Caco-2 (cell line): ENCODE measurements at regions of chr19 and their contacts with region 1.

Region 1: DNA sequence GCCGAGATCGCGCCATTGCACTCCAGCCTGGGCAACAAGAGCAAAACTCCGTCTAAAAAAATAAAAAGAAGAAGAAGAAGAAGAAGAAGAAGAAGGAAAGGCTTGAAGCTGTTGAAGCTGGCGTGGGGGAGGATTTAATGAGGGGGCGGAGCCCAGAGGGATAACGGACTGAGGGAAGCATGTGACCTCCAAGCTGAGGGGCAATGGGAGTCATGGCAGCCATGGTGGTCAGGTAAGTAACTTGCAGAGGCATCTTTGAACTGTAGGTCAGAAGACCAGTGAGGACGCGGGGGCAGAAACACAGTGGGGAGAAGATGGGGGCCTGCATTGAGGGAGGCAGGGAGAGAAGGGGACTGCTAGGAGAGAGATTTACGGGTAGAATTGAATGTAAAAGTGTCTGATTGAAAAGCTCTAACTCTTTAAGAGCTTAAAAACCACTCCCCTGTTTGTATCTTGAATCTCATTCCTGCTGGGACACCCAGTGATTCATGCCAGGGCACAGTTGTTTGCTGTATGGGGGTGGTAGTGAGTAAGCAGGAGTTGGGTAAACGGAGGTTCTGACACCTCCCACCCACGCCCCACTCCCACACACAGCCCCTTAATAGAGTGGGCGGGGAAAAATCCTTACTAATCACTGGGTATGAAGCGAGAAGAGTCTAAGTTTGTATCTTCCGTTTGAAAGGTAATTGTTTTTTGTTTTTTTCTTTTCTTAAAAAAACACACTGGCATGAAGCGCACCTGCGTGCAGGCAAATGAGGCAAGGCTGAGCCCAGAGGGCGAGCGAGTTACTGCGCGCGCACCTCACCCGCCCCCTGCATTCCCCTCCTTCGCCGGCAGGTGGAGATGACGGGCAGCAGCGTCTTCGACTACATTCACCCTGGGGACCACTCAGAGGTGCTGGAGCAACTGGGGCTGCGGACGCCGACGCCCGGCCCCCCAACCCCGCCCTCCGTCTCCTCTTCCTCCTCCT is 13.0 kb downstream of the TMEM160 start:
- DNase-seq: peak; percentile 89 to 98
- H3K4me3 ChIP-seq: peak overlapping the region; percentile 44
- H3K4me3 Mint-ChIP-seq: peak overlapping the region; percentile 79
- H3K27ac Mint-ChIP-seq: peak overlapping the region; percentile 50
- H3K4me1 ChIP-seq: peaks cover 5% of the 10 kb centered on the region; the same call in 1 of the 2 replicates
- H3K4me1 Mint-ChIP-seq: peaks cover 18% of the 10 kb centered on the region
- H3K27me3 ChIP-seq: no peaks in the 10 kb centered on the region
- H3K27me3 Mint-ChIP-seq: peaks cover 3% of the 10 kb centered on the region
- CTCF ChIP-seq: peak; percentile 94 to 98

Region 2: DNA sequence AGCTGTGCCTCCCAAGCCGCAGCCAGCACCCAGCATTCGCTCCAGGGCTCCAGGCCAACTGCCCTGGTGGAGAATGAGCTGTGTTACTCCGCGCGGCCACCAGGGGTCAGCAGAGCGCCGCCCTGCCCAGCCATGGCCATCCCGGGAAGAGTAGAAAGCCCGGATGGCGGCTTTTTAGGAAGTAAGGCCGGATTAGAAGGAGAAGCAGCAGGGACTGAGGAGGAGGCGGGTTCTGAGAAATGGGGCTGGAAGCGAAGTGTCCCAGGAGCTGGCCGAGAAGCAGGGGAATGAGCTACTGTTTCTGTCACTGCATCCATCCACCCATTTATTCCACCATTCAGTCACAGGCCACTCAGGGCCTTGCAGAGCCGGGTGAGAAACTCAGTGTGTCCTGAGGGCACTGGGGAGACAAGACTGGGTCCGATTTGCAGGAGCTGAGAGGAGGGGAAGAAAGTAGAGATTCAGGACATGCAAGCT is 22.3 kb before region 1 on chr19:
- CTCF ChIA-PET with region 1: interaction called, 11 read pairs
- POLR2A ChIA-PET with region 1: no interaction called
- intact Hi-C with region 1: loop called (anchors 1 kb)
- DNase-seq: peak; percentile 82 to 92
- H3K4me3 ChIP-seq: 0 out of 2 replicates have a peak overlapping the region, but pooled peaks have one; percentile 7
- H3K4me3 Mint-ChIP-seq: peak overlapping the region; percentile 9
- H3K27ac Mint-ChIP-seq: peak overlapping the region; percentile 10
- H3K4me1 ChIP-seq: no peaks in the 10 kb centered on the region
- H3K4me1 Mint-ChIP-seq: peaks cover 11% of the 10 kb centered on the region
- H3K27me3 ChIP-seq: no peaks in the 10 kb centered on the region
- H3K27me3 Mint-ChIP-seq: peaks cover 3% of the 10 kb centered on the region
- CTCF ChIP-seq: peak; percentile 99

Region 3: GRCh38 chr19:47047763-47048405 is 12.5 kb after region 1 on chr19:
- CTCF ChIA-PET with region 1: interaction called, 8 read pairs
- POLR2A ChIA-PET with region 1: interaction called, 5 read pairs
- intact Hi-C with region 1: loop called (anchors 1 kb)
- DNase-seq: peak; percentile 93 to 94
- H3K4me3 ChIP-seq: peak overlapping the region; percentile 80
- H3K4me3 Mint-ChIP-seq: peak overlapping the region; percentile 89
- H3K27ac Mint-ChIP-seq: peak overlapping the region; percentile 83
- H3K4me1 ChIP-seq: peaks cover 22% of the 10 kb centered on the region
- H3K4me1 Mint-ChIP-seq: peaks cover 39% of the 10 kb centered on the region
- H3K27me3 ChIP-seq: no peaks in the 10 kb centered on the region
- H3K27me3 Mint-ChIP-seq: no peaks in the 10 kb centered on the region
- CTCF ChIP-seq: no peak

Region 4: DNA sequence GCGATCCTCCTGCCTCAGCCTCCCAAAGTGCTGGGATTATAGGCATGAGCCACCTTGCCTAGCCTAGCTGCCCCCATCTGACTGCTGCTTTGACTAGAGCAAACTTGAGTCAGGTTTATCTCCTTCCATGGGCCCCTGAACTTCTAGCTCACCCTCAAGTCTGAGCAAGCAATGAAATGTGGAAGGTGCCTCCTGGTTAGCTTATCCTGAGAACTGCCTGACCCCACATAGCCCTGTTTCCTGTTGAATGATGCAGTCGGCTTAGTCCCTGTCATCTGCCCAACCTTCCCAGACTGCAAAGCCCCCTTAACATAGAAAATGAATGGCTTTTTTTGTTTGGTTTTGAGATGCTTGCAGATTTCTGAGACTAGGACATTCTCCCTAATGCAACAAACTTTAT is 21.9 kb after region 1 on chr19:
- CTCF ChIA-PET with region 1: interaction called, 4 read pairs
- POLR2A ChIA-PET with region 1: interaction called, 8 read pairs
- intact Hi-C with region 1: loop called (anchors 1 kb)
- DNase-seq: no peak
- H3K4me3 ChIP-seq: no peak overlapping the region
- H3K4me3 Mint-ChIP-seq: peak overlapping the region; percentile 64
- H3K27ac Mint-ChIP-seq: peak overlapping the region; percentile 95
- H3K4me1 ChIP-seq: peaks cover 55% of the 10 kb centered on the region
- H3K4me1 Mint-ChIP-seq: peaks cover 63% of the 10 kb centered on the region
- H3K27me3 ChIP-seq: no peaks in the 10 kb centered on the region
- H3K27me3 Mint-ChIP-seq: no peaks in the 10 kb centered on the region
- CTCF ChIP-seq: no peak

Region 5: DNA sequence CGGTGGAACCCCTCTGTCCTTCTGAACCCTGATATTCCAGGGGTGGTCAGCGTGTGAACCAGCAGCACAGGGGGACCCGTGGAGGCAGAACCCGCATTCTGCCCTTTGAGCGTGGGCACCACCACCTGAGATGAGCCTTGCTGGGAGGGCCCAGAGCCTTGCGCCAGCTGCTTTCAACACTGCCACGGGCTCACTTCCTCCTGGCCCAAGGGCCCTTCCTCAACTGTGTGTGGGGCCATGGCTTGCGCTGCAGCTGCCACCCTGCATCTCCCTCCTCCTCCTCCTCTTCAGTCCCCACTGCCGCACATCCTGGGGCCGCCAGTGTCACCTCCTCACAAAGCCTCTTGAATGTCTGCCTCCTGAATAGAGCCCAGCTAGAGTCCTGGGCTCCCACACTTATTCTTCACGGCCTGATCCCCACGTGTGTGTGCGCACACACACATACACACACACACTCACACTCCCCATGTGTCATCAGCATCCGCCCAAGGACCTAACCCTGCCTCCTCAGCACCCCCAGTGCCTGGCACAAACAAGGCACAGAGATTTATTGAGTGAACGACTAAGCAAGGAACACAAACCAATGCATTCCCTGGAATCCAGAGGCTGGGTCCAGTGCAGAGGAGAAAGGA is 39.9 kb after region 1 on chr19:
- CTCF ChIA-PET with region 1: interaction called, 10 read pairs
- POLR2A ChIA-PET with region 1: no interaction called
- intact Hi-C with region 1: loop called (anchors 5 kb)
- DNase-seq: no peak
- H3K4me3 ChIP-seq: no peak overlapping the region
- H3K4me3 Mint-ChIP-seq: no peak overlapping the region
- H3K27ac Mint-ChIP-seq: no peak overlapping the region
- H3K4me1 ChIP-seq: peaks cover 10% of the 10 kb centered on the region
- H3K4me1 Mint-ChIP-seq: peaks cover 3% of the 10 kb centered on the region
- H3K27me3 ChIP-seq: no peaks in the 10 kb centered on the region
- H3K27me3 Mint-ChIP-seq: no peaks in the 10 kb centered on the region
- CTCF ChIP-seq: no peak